ENCODE measurements at regions of chr15 and their contacts with region 1.

Region 1: GRCh38 chr15:37100109-37100965 is at the start of gene MEIS2:
- DNase-seq: peak; percentile 95
- ATAC-seq: peak; percentile 80
- total RNA-seq, gene MEIS2: 45.4 TPM

Region 2: GRCh38 chr15:35751413-35752133 is 1348.8 kb before region 1 on chr15:
- intact Hi-C with region 1: loop called (anchors 5 kb)
- DNase-seq: no peak
- ATAC-seq: peak; percentile 79

Region 3: GRCh38 chr15:36598529-36599177 is 501.7 kb before region 1 on chr15:
- intact Hi-C with region 1: loop called (anchors 5 kb)
- DNase-seq: no peak
- ATAC-seq: no peak

Region 4: DNA sequence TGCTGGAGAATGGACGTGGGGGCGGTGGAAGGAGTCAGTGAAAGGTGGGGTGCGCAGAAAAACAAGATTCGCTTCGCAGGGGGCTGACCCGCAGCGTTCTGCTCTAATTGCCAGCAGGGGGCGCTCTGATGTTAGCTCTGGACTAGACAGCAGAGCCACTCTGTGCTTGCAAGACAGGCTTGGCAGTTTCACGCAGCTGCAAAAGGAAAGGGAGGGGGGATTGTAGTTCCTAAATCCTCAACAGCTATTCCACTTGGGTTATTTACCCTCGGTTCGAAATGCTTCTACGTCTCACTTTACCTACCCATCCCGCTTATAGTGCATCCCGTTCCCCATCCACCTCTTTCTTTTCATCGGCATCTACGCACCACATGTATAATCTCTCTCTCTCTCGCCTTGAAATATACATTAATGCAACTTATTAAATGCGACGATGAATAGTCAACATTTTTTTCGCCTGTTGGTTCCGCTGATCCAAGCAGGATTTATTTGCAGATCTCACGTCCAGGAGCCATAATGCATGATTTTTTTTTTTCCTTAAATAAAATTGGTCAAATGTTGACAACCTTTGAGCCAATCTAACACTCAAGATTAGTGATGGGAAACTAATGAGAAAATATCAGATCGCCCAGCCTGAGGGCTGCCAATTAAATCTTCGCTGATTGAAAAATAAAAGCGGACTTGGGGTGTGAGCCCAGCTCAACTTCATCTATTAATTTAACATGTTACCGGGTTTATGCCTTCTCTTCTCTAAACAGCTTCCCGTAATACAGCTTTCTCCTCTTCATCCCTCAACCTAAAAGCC is 216.4 kb before region 1 on chr15:
- intact Hi-C with region 1: loop called (anchors 2 kb)
- DNase-seq: peak; percentile 91
- ATAC-seq: peak; percentile 88

Region 5: DNA sequence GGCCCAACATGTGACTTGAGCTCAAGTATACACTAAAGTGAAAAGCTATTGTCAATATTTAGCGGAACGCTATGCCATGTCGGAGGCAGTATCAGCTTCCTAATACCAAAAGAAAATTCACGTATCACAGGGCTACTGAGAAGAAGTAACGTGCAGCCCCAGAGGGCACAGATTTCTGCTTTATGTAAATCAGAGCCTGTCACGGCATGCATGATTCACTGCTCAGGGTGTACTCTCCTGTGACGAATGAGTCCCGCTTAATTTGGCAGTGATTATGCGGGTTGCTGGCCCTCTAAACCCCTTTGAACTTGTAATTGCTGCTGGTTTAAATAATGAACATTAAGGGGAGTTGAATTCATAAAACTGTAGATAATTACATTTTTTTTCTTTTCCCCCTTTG is 85.3 kb before region 1 on chr15:
- intact Hi-C with region 1: loop called (anchors 5 kb)
- DNase-seq: no peak
- ATAC-seq: peak; percentile 64